AG04449 (cell line): ENCODE measurements at regions of chr1 and their contacts with region 1.

Region 1: GRCh38 chr1:14915356-14916054 is 238.0 kb upstream of the TMEM51 start:
- DNase-seq: no peak
- H3K4me3 ChIP-seq: no peak overlapping the region
- CTCF ChIP-seq: peak; percentile 90

Region 2: DNA sequence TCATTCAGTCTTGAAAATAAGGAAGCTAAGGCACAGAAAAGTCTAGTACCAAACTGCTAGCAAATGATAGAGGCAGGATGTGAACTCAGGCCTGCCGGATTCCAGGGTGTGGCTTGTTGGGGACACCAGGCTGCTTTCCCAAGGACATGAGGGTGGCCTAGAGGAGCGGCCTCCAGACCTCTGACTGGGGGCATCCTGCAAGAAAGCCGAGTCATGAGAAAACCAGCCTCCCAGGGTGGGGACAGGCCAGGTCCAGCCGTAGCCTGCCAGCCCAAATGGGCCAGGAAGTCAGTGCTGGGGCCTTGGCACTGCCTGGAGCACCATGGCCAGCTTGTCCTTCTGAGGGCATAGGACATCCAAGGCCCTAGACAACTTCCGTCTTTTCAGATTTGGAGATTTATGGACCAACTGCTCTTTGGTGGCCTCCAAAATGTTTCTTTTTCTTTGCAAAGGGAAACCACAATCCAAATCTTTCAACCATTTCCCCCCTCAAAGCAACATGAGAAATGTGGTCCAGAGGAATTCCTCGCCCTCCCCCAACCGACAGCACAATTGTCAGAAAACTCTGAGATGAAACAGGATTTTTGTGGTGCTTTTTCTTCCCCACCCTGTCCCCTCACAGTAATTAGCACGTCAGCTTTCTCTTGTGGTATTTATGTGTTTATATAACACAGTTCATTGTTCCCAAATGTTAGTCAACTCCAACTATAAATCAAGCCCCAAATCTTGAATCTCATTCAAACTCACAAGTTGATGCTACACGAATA is 104.7 kb before region 1 on chr1:
- CTCF ChIA-PET with region 1: no interaction called
- POLR2A ChIA-PET with region 1: no interaction called
- DNase-seq: no peak
- H3K4me3 ChIP-seq: no peak overlapping the region
- CTCF ChIP-seq: no peak

Region 3: GRCh38 chr1:14894811-14895560 is 20.5 kb before region 1 on chr1:
- CTCF ChIA-PET with region 1: interaction called, 12 read pairs
- POLR2A ChIA-PET with region 1: no interaction called
- DNase-seq: no peak
- H3K4me3 ChIP-seq: no peak overlapping the region
- CTCF ChIP-seq: no peak